ENCODE measurements at regions of chr11 and their contacts with region 1.

Region 1: GRCh38 chr11:23727794-23728193 is 769.1 kb upstream of the LUZP2 start:
- DNase-seq: no peak
- ATAC-seq: peak; percentile 56
- H3K4me3 ChIP-seq: no peak overlapping the region
- H3K27ac ChIP-seq: no peak overlapping the region
- H3K4me1 ChIP-seq: no peaks in the 10 kb centered on the region
- H3K27me3 ChIP-seq: no peaks in the 10 kb centered on the region
- CTCF ChIP-seq: no peak
- EP300 ChIP-seq: no peak
- POLR2A ChIP-seq: no peak
- RAD21 ChIP-seq: no peak

Region 2: DNA sequence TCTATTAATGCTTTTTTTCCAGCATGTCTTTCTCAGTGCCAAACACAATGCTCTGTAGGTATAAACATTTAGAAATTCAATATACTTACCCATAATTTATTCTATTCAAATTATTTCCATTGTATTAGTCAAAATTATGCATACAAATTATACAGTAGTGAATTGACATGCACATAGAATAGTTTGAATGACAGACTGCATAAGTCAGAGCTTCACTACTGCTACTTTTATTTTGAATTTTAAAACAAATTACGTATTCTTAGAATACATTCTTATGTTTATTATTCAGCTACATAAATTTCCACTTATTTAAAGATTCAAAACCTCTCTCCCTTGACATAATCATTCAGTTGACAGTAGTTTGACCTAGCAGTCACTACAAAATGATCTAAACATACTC is 59.5 kb before region 1 on chr11:
- CTCF ChIA-PET with region 1: no interaction called
- POLR2A ChIA-PET with region 1: no interaction called
- RAD21 ChIA-PET with region 1: no interaction called
- SMC1A ChIA-PET with region 1: no interaction called
- in situ Hi-C with region 1: loop called (anchors 10 kb)
- intact Hi-C with region 1: no loop called
- DNase-seq: no peak
- ATAC-seq: no peak
- H3K4me3 ChIP-seq: no peak overlapping the region
- H3K27ac ChIP-seq: no peak overlapping the region
- H3K4me1 ChIP-seq: no peaks in the 10 kb centered on the region
- H3K27me3 ChIP-seq: no peaks in the 10 kb centered on the region
- CTCF ChIP-seq: no peak
- EP300 ChIP-seq: no peak
- POLR2A ChIP-seq: no peak
- RAD21 ChIP-seq: no peak